CD4-positive, alpha-beta T cell (primary cell): ENCODE measurements at regions of chr16 and their contacts with region 1.

Region 1: DNA sequence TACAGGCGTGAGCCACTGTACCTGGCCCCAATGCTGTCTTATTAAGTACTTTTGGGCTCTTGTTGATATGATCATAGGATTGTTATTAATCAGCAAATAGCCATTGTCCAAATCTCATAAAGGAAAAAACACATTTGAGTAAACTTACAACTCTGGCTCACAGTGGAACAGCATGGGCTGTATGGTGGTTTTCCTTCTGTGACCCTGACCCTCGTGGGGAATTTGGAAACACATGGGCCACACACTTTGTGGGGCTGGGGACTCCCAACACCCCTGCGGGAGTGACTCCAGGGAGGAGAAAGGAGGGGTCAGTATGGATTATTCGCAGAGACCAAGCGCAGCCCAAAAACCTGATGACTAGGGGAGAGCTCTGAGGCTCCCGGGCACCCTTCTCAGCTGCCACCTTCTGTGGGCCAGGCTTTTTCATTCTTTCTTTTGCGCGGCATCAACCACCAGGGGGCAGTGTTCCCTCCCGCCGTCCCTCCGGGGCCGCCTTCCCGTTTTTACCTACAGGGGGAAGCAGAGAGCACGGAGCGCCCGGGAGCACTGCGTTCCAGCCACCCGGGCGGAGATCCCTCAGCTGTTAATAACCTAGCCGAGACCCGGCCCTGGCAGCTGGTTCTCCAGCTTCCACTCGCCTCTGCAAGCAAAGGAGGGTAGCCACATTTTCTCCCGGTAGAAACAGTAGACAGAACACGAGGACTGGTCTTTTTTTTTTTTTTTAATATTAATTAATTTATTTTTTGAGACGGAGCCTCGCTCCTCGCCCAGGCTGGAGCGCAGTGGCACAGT is 9.7 kb downstream of the TSNAXIP1 start:
- DNase-seq: peak; percentile 75 to 95 (median 89)
- ATAC-seq: peak; percentile 99
- H3K4me3 ChIP-seq: no peak overlapping the region
- H3K4me3 Mint-ChIP-seq: peak overlapping the region; percentile 56
- H3K27ac ChIP-seq: no peak overlapping the region
- H3K27ac Mint-ChIP-seq: no peak overlapping the region
- H3K4me1 ChIP-seq: peaks cover 7% of the 10 kb centered on the region
- H3K4me1 Mint-ChIP-seq: peaks cover 7% of the 10 kb centered on the region
- H3K27me3 ChIP-seq: no peaks in the 10 kb centered on the region
- H3K27me3 Mint-ChIP-seq: no peaks in the 10 kb centered on the region
- CTCF ChIP-seq: peak; percentile 100

Region 2: GRCh38 chr16:67800338-67800926 is 16.0 kb before region 1 on chr16:
- CTCF ChIA-PET with region 1: interaction called, 35 read pairs
- POLR2A ChIA-PET with region 1: interaction called, 3 read pairs
- intact Hi-C with region 1: no loop called
- DNase-seq: no peak
- ATAC-seq: no peak
- H3K4me3 ChIP-seq: no peak overlapping the region
- H3K4me3 Mint-ChIP-seq: no peak overlapping the region
- H3K27ac ChIP-seq: no peak overlapping the region
- H3K27ac Mint-ChIP-seq: peak overlapping the region; percentile 60
- H3K4me1 ChIP-seq: peaks cover 49% of the 10 kb centered on the region
- H3K4me1 Mint-ChIP-seq: peaks cover 78% of the 10 kb centered on the region
- H3K27me3 ChIP-seq: no peaks in the 10 kb centered on the region
- H3K27me3 Mint-ChIP-seq: no peaks in the 10 kb centered on the region
- CTCF ChIP-seq: no peak

Region 3: DNA sequence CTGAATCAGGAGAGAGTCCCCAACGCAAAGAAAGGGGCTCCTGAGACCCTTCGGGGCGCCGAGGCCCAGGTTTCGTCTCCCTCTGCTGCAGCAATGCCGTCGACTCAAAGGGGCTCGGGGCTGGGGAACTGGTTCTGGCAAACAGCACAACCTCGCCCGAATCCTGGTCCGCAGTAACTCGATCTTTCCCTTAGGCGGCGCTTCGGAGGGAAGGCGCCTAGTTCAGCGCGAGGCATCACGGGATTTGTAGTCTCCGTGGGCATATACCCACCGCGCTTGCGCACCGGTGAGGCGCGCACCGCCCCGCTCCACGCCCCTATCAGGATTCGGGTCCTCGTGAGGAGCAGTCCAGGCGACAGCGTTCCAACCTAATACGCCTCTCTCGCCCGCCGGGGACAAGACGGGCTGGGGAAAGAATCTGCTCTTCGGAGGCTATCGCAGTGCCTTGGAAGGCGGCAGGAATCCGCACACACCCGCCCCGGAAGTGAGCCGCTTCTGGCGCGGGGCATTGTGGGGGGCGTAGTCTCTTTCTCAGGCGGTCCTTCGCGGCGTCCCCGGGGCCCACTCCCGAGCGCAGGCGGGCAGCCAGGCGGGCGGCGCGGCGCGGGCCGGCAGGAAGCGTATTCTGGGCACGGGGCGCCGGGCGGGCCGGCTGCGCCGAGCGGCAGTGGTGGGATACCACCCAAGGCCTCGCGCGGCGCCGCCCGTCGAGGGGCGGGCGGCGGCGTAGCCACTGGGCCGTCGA is 25.5 kb after region 1 on chr16 and contains the start of gene THAP11:
- CTCF ChIA-PET with region 1: interaction called, 41 read pairs
- POLR2A ChIA-PET with region 1: interaction called, 4 read pairs
- intact Hi-C with region 1: no loop called
- DNase-seq: peak; percentile 90 to 97 (median 94)
- ATAC-seq: peak; percentile 55
- H3K4me3 ChIP-seq: peak within 1 kb of the TSS; percentile 96
- H3K4me3 Mint-ChIP-seq: peak within 1 kb of the TSS; percentile 98
- H3K27ac ChIP-seq: peak within 1 kb of the TSS; percentile 87 to 99
- H3K27ac Mint-ChIP-seq: peak within 1 kb of the TSS; percentile 95
- H3K4me1 ChIP-seq: peaks cover 50% of the 10 kb centered on the region
- H3K4me1 Mint-ChIP-seq: peaks cover 42% of the 10 kb centered on the region
- H3K27me3 ChIP-seq: no peaks in the 10 kb centered on the region
- H3K27me3 Mint-ChIP-seq: no peaks in the 10 kb centered on the region
- CTCF ChIP-seq: peak; percentile 85
- total RNA-seq, gene THAP11: 31.2 to 32.1 TPM

Region 4: GRCh38 chr16:67872786-67873537 is 56.5 kb after region 1 on chr16 and contains the start of gene EDC4:
- CTCF ChIA-PET with region 1: interaction called, 10 read pairs
- POLR2A ChIA-PET with region 1: no interaction called
- intact Hi-C with region 1: no loop called
- DNase-seq: peak; percentile 77 to 92 (median 84)
- ATAC-seq: peak; percentile 93
- H3K4me3 ChIP-seq: peak within 1 kb of the TSS; percentile 99
- H3K4me3 Mint-ChIP-seq: peak within 1 kb of the TSS; percentile 96
- H3K27ac ChIP-seq: peak within 1 kb of the TSS; percentile 82 to 93
- H3K27ac Mint-ChIP-seq: peak within 1 kb of the TSS; percentile 89
- H3K4me1 ChIP-seq: peaks cover 44% of the 10 kb centered on the region
- H3K4me1 Mint-ChIP-seq: peaks cover 35% of the 10 kb centered on the region
- H3K27me3 ChIP-seq: no peaks in the 10 kb centered on the region
- H3K27me3 Mint-ChIP-seq: no peaks in the 10 kb centered on the region
- CTCF ChIP-seq: no peak
- total RNA-seq, gene EDC4: 134 to 145 TPM

Region 5: GRCh38 chr16:67928561-67929364 is 112.3 kb after region 1 on chr16:
- CTCF ChIA-PET with region 1: interaction called, 13 read pairs
- POLR2A ChIA-PET with region 1: interaction called, 4 read pairs
- intact Hi-C with region 1: loop called (anchors 1 to 2 kb)
- DNase-seq: peak; percentile 61 to 84 (median 73)
- ATAC-seq: peak; percentile 97
- H3K4me3 ChIP-seq: no peak overlapping the region
- H3K4me3 Mint-ChIP-seq: no peak overlapping the region
- H3K27ac ChIP-seq: no peak overlapping the region
- H3K27ac Mint-ChIP-seq: peak overlapping the region; percentile 47
- H3K4me1 ChIP-seq: peaks cover 12% of the 10 kb centered on the region
- H3K4me1 Mint-ChIP-seq: peaks cover 9% of the 10 kb centered on the region
- H3K27me3 ChIP-seq: no peaks in the 10 kb centered on the region
- H3K27me3 Mint-ChIP-seq: no peaks in the 10 kb centered on the region
- CTCF ChIP-seq: peak; percentile 82

Region 6: DNA sequence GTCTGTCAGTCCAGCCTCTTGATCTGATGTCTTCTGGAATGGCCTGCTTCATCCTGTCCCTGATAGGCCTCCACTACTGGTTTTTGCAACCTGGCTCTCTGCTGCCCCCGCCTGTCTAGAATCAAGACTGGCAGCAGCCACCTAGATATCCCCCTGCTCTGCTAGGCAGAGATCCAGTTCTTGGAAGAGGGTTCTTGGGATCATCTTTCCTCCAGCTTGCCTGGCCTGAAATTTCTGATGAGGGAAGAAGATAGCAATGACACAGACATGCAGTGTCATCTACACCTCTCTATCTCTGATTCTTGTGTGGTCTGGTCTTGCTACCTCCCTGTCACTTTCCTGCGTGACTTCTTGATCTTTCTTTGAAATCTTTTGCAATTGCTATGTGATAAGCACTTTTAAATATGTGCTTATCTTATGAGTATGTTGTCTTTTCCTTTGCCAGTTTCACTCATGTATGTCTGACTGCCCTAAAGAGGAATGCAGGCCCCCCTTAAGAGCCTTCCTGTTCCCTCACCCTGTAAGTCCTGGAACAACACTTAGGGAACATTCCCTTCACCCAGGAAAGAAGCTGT is 248.4 kb after region 1 on chr16:
- CTCF ChIA-PET with region 1: interaction called, 8 read pairs
- POLR2A ChIA-PET with region 1: no interaction called
- intact Hi-C with region 1: loop called in 1 of 2 experiments (anchors 1 kb)
- DNase-seq: peak; percentile 55 to 82 (median 68)
- ATAC-seq: peak; percentile 83
- H3K4me3 ChIP-seq: no peak overlapping the region
- H3K4me3 Mint-ChIP-seq: peak overlapping the region; percentile 22
- H3K27ac ChIP-seq: peak overlapping the region in 1 of 2 donors; percentile 55
- H3K27ac Mint-ChIP-seq: peak overlapping the region; percentile 50
- H3K4me1 ChIP-seq: peaks cover 86% of the 10 kb centered on the region
- H3K4me1 Mint-ChIP-seq: peaks cover 84% of the 10 kb centered on the region
- H3K27me3 ChIP-seq: no peaks in the 10 kb centered on the region
- H3K27me3 Mint-ChIP-seq: no peaks in the 10 kb centered on the region
- CTCF ChIP-seq: peak; percentile 87